ENCODE measurements at regions of chr14 and their contacts with region 1.

Region 1: DNA sequence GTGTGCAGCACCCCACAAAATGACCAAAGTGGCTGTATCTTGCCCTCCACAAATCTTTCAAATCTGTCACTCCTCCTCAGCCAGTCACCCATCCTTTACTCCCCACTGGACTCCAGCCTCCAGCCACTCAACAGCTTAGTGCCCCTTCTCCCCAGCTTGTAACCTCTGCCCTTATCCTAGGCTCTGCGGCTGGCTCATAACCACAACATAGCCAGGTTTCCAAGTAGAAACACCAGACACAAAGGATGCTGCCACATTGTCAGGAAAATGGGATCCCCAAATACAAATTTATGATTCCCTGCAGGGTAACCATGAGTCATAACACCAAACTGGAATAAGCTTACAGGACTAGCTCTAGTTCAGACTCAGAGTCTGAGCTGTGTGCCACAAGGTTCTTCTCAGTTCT is 15.1 kb downstream of the OXA1L start:
- DNase-seq: peak; percentile 14
- H3K4me3 ChIP-seq: no peak overlapping the region
- H3K27ac ChIP-seq: no peak overlapping the region
- H3K4me1 ChIP-seq: no peaks in the 10 kb centered on the region
- H3K27me3 ChIP-seq: no peaks in the 10 kb centered on the region
- CTCF ChIP-seq: no peak

Region 2: GRCh38 chr14:22836301-22837113 is 54.9 kb after region 1 on chr14 and contains the start of gene MMP14:
- CTCF ChIA-PET with region 1: no interaction called
- dilution Hi-C with region 1: no loop called
- in situ Hi-C with region 1: no loop called
- intact Hi-C with region 1: loop called (anchors 5 kb)
- DNase-seq: peak; percentile 86
- H3K4me3 ChIP-seq: peak within 1 kb of the TSS; percentile 84 to 94 (median 86)
- H3K27ac ChIP-seq: peak within 1 kb of the TSS; percentile 86
- H3K4me1 ChIP-seq: peaks cover 24% of the 10 kb centered on the region
- H3K27me3 ChIP-seq: no peaks in the 10 kb centered on the region
- CTCF ChIP-seq: peak in 1 of 2 donors; percentile 57
- total RNA-seq, gene MMP14: 525 to 766 TPM

Region 3: GRCh38 chr14:22852940-22853767 is 71.6 kb after region 1 on chr14:
- CTCF ChIA-PET with region 1: no interaction called
- dilution Hi-C with region 1: no loop called
- in situ Hi-C with region 1: loop called in 1 of 2 experiments (anchors 10 kb)
- intact Hi-C with region 1: loop called (anchors 1 kb)
- DNase-seq: peak; percentile 80
- H3K4me3 ChIP-seq: peak overlapping the region in 2 of 3 experiments; percentile 7 to 52
- H3K27ac ChIP-seq: peak overlapping the region; percentile 90
- H3K4me1 ChIP-seq: peaks cover 54% of the 10 kb centered on the region
- H3K27me3 ChIP-seq: no peaks in the 10 kb centered on the region
- CTCF ChIP-seq: peak; percentile 91 to 93

Region 4: GRCh38 chr14:23605931-23606585 is 824.5 kb after region 1 on chr14:
- CTCF ChIA-PET with region 1: no interaction called
- dilution Hi-C with region 1: no loop called
- in situ Hi-C with region 1: no loop called
- intact Hi-C with region 1: no loop called
- DNase-seq: peak; percentile 5
- H3K4me3 ChIP-seq: no peak overlapping the region
- H3K27ac ChIP-seq: no peak overlapping the region
- H3K4me1 ChIP-seq: no peaks in the 10 kb centered on the region
- H3K27me3 ChIP-seq: no peaks in the 10 kb centered on the region
- CTCF ChIP-seq: no peak